Heart right ventricle (tissue), 16 donors: ENCODE measurements at regions of chr7 and their contacts with region 1.

Region 1: DNA sequence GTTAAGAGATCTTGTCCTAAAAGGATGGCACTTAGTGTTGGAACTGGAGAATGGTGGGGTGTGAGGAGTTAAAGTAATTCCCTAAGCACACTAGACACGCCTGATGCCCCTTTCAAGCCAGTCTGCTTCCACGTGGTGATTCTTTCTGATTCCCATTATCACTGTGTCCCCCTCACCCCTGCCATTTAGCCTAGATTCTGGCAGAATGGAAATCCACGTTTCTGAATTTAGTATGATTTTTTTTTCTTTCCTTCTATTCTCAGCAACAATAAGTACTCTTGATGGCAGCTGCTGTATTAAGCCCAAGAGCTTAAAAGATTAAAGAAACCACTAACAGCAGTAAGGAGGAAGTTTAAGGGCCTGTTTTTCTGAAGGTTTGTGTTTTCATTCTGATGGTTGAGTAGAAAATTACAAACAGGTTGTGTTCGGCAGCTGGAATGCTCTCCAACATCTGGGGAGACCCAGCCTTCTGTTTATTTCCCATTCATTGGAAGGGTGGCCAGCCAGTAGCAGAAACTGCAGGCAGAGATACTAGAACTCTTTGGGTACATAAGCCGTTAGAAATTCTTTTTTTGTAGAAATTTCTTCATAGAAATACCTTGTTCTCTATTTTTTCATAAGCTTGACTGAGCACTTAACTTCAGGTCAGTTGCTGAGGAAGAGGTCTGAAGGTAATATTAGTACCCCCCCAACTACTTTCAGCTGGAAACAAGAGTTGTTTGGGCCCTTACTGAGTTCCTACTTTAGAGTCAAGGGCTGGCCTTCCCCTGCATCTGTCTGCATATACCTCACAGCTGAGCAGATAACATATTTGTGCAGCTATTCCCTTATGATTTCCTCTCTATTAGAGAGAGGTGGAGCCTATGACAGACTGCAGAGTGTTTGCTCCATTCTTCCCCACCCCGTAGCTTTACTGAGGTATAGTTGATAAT is 355.1 kb downstream of the AUTS2 start:
- DNase-seq: no peak
- ATAC-seq: peak in 1 of 8 donors; percentile 32
- H3K4me3 ChIP-seq: no peak overlapping the region
- H3K27ac ChIP-seq: no peak overlapping the region
- H3K4me1 ChIP-seq: peaks cover 3 to 47% (median 22%) of the 10 kb centered on the region in 9 donors
- H3K27me3 ChIP-seq: no peaks in the 10 kb centered on the region
- CTCF ChIP-seq: no peak

Region 2: GRCh38 chr7:70016044-70016770 is 62.8 kb after region 1 on chr7:
- intact Hi-C with region 1: loop called in 1 of 10 experiments (anchors 10 kb)
- DNase-seq: no peak
- ATAC-seq: peak in 6 of 8 donors; percentile 49 to 92 (median 58)
- H3K4me3 ChIP-seq: no peak overlapping the region
- H3K27ac ChIP-seq: no peak overlapping the region
- H3K4me1 ChIP-seq: peaks cover 0 to 31% (median 4%) of the 10 kb centered on the region in 9 donors
- H3K27me3 ChIP-seq: no peaks in the 10 kb centered on the region
- CTCF ChIP-seq: no peak